B cell (primary cell): ENCODE measurements at regions of chr17 and their contacts with region 1.

Region 1: GRCh38 chr17:4733073-4733531 is 1.9 kb downstream of the MED11 start:
- DNase-seq: peak; percentile 89
- ATAC-seq: peak; percentile 59
- H3K4me3 ChIP-seq: no peak overlapping the region
- H3K4me3 Mint-ChIP-seq: peak overlapping the region; percentile 65
- H3K27ac ChIP-seq: peak overlapping the region; percentile 66 to 68
- H3K27ac Mint-ChIP-seq: peak overlapping the region; percentile 93
- H3K4me1 ChIP-seq: peaks cover 33 to 47% of the 10 kb centered on the region in 2 donors
- H3K4me1 Mint-ChIP-seq: peaks cover 49% of the 10 kb centered on the region
- H3K27me3 ChIP-seq: no peaks in the 10 kb centered on the region
- H3K27me3 Mint-ChIP-seq: no peaks in the 10 kb centered on the region
- CTCF ChIP-seq: peak; percentile 76

Region 2: GRCh38 chr17:4143563-4144421 is 589.3 kb before region 1 on chr17:
- CTCF ChIA-PET with region 1: no interaction called
- POLR2A ChIA-PET with region 1: no interaction called
- intact Hi-C with region 1: loop called (anchors 5 kb)
- DNase-seq: peak; percentile 97
- ATAC-seq: peak; percentile 69
- H3K4me3 ChIP-seq: peak overlapping the region; percentile 65 to 95 (median 93)
- H3K4me3 Mint-ChIP-seq: peak overlapping the region; percentile 94
- H3K27ac ChIP-seq: peak overlapping the region; percentile 98 to 99
- H3K27ac Mint-ChIP-seq: peak overlapping the region; percentile 100
- H3K4me1 ChIP-seq: peaks cover 22 to 26% of the 10 kb centered on the region in 2 donors
- H3K4me1 Mint-ChIP-seq: peaks cover 39% of the 10 kb centered on the region
- H3K27me3 ChIP-seq: no peaks in the 10 kb centered on the region
- H3K27me3 Mint-ChIP-seq: no peaks in the 10 kb centered on the region
- CTCF ChIP-seq: no peak

Region 3: GRCh38 chr17:4796553-4796921 is 63.4 kb after region 1 on chr17:
- CTCF ChIA-PET with region 1: interaction called, 4 read pairs
- POLR2A ChIA-PET with region 1: no interaction called
- intact Hi-C with region 1: loop called (anchors 1 kb)
- DNase-seq: no peak
- ATAC-seq: no peak
- H3K4me3 ChIP-seq: peak overlapping the region; percentile 65 to 96 (median 86)
- H3K4me3 Mint-ChIP-seq: peak overlapping the region; percentile 100
- H3K27ac ChIP-seq: peak overlapping the region in 1 of 2 donors; percentile 68
- H3K27ac Mint-ChIP-seq: peak overlapping the region; percentile 97
- H3K4me1 ChIP-seq: peaks cover 7 to 16% of the 10 kb centered on the region in 2 donors
- H3K4me1 Mint-ChIP-seq: peaks cover 11% of the 10 kb centered on the region
- H3K27me3 ChIP-seq: no peaks in the 10 kb centered on the region
- H3K27me3 Mint-ChIP-seq: no peaks in the 10 kb centered on the region
- CTCF ChIP-seq: no peak

Region 4: GRCh38 chr17:4833178-4833940 is 100.3 kb after region 1 on chr17 and contains the start of gene MINK1:
- CTCF ChIA-PET with region 1: no interaction called
- POLR2A ChIA-PET with region 1: no interaction called
- intact Hi-C with region 1: loop called (anchors 1 kb)
- DNase-seq: peak; percentile 97
- ATAC-seq: peak; percentile 93
- H3K4me3 ChIP-seq: peak within 1 kb of the TSS; percentile 68 to 86 (median 79)
- H3K4me3 Mint-ChIP-seq: peak within 1 kb of the TSS; percentile 99
- H3K27ac ChIP-seq: peak within 1 kb of the TSS; percentile 77 to 85
- H3K27ac Mint-ChIP-seq: peak within 1 kb of the TSS; percentile 99
- H3K4me1 ChIP-seq: peaks cover 21 to 26% of the 10 kb centered on the region in 2 donors
- H3K4me1 Mint-ChIP-seq: peaks cover 29% of the 10 kb centered on the region
- H3K27me3 ChIP-seq: no peaks in the 10 kb centered on the region
- H3K27me3 Mint-ChIP-seq: no peaks in the 10 kb centered on the region
- CTCF ChIP-seq: no peak
- total RNA-seq, gene MINK1: 108 and 109 TPM in 2 replicates

Region 5: GRCh38 chr17:4903051-4903818 is 170.1 kb after region 1 on chr17 and contains the start of gene CHRNE:
- CTCF ChIA-PET with region 1: interaction called, 12 read pairs
- POLR2A ChIA-PET with region 1: interaction called, 3 read pairs
- intact Hi-C with region 1: no loop called
- DNase-seq: peak; percentile 87
- ATAC-seq: peak; percentile 38
- H3K4me3 ChIP-seq: peak within 1 kb of the TSS in 1 of 5 experiments; percentile 38
- H3K4me3 Mint-ChIP-seq: peak within 1 kb of the TSS; percentile 72
- H3K27ac ChIP-seq: peak within 1 kb of the TSS in 1 of 2 donors; percentile 22
- H3K27ac Mint-ChIP-seq: peak within 1 kb of the TSS; percentile 82
- H3K4me1 ChIP-seq: peaks cover 45 to 53% of the 10 kb centered on the region in 2 donors
- H3K4me1 Mint-ChIP-seq: peaks cover 45% of the 10 kb centered on the region
- H3K27me3 ChIP-seq: peaks cover 0 to 29% (median 10%) of the 10 kb centered on the region in 4 experiments
- H3K27me3 Mint-ChIP-seq: peaks cover 7% of the 10 kb centered on the region
- CTCF ChIP-seq: peak; percentile 83
- total RNA-seq, gene CHRNE: 0.99 and 1.0 TPM in 2 replicates